Activated CD4-positive, alpha-beta T cell treated with anti-CD3 and anti-CD28 coated beads, Interleukin-2, amount 10 ng/mL, durations not matched to agents 24 days and 14 days (primary cell): ENCODE measurements at regions of chr1 and their contacts with region 1.

Region 1: GRCh38 chr1:203026031-203026989 is at the start of gene PPFIA4:
- DNase-seq: peak; percentile 97
- H3K4me3 Mint-ChIP-seq: peak within 1 kb of the TSS; percentile 92
- H3K27ac Mint-ChIP-seq: peak within 1 kb of the TSS; percentile 80
- H3K4me1 Mint-ChIP-seq: peaks cover 26% of the 10 kb centered on the region
- H3K27me3 Mint-ChIP-seq: peaks cover 2% of the 10 kb centered on the region
- total RNA-seq, gene PPFIA4: 34.2 and 35.1 TPM in 2 replicates

Region 2: GRCh38 chr1:202957733-202958543 is 68.4 kb before region 1 on chr1 and contains the start of gene ADIPOR1:
- intact Hi-C with region 1: loop called (anchors 2 kb)
- DNase-seq: peak; percentile 98
- H3K4me3 Mint-ChIP-seq: peak within 1 kb of the TSS; percentile 89
- H3K27ac Mint-ChIP-seq: peak within 1 kb of the TSS; percentile 82
- H3K4me1 Mint-ChIP-seq: peaks cover 31% of the 10 kb centered on the region
- H3K27me3 Mint-ChIP-seq: no peaks in the 10 kb centered on the region
- total RNA-seq, gene ADIPOR1: 86.7 and 92.1 TPM in 2 replicates